Activated CD4-positive, alpha-beta memory T cell treated with anti-CD3 and anti-CD28 coated beads, Interleukin-2, amount 10 ng/mL, durations not matched to agents 7 days and 5 days (primary cell): ENCODE measurements at regions of chr1 and their contacts with region 1.

Region 1: DNA sequence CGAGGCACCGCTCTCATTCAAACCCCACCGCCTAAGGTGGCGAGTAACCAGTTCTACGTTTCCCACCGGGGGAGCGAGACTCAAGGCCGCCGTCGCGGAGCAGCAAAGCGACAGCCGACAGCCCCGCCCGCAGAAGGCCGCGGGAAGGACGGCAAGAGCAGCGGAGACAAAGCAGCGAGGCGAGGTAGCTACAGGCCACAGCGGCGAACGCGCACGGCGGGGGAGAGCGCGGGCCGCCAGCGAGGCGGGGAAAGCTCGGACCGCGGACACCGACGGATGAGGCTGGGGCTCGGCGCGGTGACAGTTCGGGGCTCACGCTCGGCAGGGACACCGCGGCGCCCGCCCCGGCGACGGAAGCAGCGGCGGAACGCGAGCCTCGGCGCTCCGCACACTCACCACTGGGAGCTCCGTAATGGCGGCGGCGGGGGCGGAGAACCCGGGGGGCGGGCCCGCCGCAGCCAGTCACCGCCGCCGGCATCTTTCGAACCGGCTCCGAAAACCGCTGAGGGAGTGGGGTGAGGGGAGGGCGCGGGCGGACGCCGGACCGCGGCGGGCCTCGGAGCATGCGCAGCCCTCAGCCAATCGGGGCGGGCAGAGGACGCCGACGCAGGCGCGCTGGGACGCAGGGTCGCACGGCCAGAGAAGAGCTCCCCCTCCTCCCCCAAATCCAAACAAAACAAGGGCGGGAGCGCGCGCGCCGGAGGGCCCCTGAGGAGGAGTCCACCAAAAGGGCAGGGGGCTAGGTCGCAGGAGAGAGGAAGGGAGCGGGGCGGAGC is 666 bp downstream of the HP1BP3 start:
- DNase-seq: peak; percentile 96
- H3K4me3 Mint-ChIP-seq: peak overlapping the region; percentile 97
- H3K27ac Mint-ChIP-seq: peak overlapping the region; percentile 98
- H3K4me1 Mint-ChIP-seq: peaks cover 31% of the 10 kb centered on the region
- H3K27me3 Mint-ChIP-seq: no peaks in the 10 kb centered on the region

Region 2: GRCh38 chr1:20661207-20662109 is 125.0 kb before region 1 on chr1 and contains the start of gene DDOST:
- CTCF ChIA-PET with region 1: no interaction called
- POLR2A ChIA-PET with region 1: interaction called, 20 read pairs
- DNase-seq: peak; percentile 96
- H3K4me3 Mint-ChIP-seq: peak within 1 kb of the TSS; percentile 99
- H3K27ac Mint-ChIP-seq: peak within 1 kb of the TSS; percentile 97
- H3K4me1 Mint-ChIP-seq: peaks cover 52% of the 10 kb centered on the region
- H3K27me3 Mint-ChIP-seq: no peaks in the 10 kb centered on the region
- total RNA-seq, gene DDOST: 171 to 182 TPM

Region 3: DNA sequence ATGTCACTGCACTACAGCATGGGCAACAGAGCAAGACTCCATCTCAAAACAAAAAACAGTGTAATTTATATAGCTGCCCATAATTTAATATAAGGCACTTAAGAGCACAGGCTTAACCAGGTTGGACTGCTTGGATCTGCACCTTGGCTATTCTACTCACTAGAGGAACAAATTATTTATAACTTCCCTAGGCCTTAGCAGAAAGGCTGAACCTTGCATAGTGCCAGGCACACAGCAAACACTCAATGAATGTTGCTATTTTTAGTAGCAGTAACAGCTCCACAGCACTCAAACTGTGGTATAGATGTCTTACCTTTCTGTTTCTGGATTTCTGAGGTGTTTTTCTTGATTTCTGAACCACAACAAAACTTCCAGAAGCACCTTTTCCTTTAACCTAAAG is 19.2 kb before region 1 on chr1:
- CTCF ChIA-PET with region 1: interaction called, 3 read pairs
- POLR2A ChIA-PET with region 1: interaction called, 18 read pairs
- DNase-seq: no peak
- H3K4me3 Mint-ChIP-seq: no peak overlapping the region
- H3K27ac Mint-ChIP-seq: no peak overlapping the region
- H3K4me1 Mint-ChIP-seq: no peaks in the 10 kb centered on the region
- H3K27me3 Mint-ChIP-seq: no peaks in the 10 kb centered on the region

Region 4: GRCh38 chr1:20775700-20776099 is 10.7 kb before region 1 on chr1:
- CTCF ChIA-PET with region 1: interaction called, 3 read pairs
- POLR2A ChIA-PET with region 1: interaction called, 21 read pairs
- DNase-seq: no peak
- H3K4me3 Mint-ChIP-seq: no peak overlapping the region
- H3K27ac Mint-ChIP-seq: no peak overlapping the region
- H3K4me1 Mint-ChIP-seq: peaks cover 20% of the 10 kb centered on the region
- H3K27me3 Mint-ChIP-seq: no peaks in the 10 kb centered on the region

Region 5: DNA sequence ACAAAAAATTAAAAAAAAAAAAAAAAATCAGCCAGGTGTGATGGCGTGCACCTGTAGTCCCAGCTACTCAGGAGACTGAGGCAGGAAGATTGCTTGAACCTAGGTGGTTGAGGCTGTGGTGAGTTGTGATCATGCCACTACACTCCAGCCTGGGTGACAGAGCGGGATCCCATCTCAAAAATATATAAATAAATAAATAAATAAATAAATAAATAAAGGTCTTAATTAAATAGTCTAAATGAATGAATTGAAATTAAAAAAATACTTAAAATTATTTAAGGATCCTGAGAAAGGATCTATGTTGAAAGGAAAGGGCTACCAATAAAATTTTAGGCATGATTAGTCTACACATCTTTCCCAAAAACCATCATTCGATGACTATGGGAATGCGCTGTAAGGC is 68.1 kb after region 1 on chr1:
- CTCF ChIA-PET with region 1: no interaction called
- POLR2A ChIA-PET with region 1: no interaction called
- DNase-seq: no peak
- H3K4me3 Mint-ChIP-seq: no peak overlapping the region
- H3K27ac Mint-ChIP-seq: no peak overlapping the region
- H3K4me1 Mint-ChIP-seq: no peaks in the 10 kb centered on the region
- H3K27me3 Mint-ChIP-seq: no peaks in the 10 kb centered on the region

Region 6: GRCh38 chr1:21200767-21201166 is 414.3 kb after region 1 on chr1:
- CTCF ChIA-PET with region 1: interaction called, 18 read pairs
- POLR2A ChIA-PET with region 1: interaction called, 10 read pairs
- DNase-seq: no peak
- H3K4me3 Mint-ChIP-seq: no peak overlapping the region
- H3K27ac Mint-ChIP-seq: no peak overlapping the region
- H3K4me1 Mint-ChIP-seq: no peaks in the 10 kb centered on the region
- H3K27me3 Mint-ChIP-seq: peaks cover 9% of the 10 kb centered on the region